ENCODE measurements at regions of chr21 and their contacts with region 1.

Region 1: GRCh38 chr21:42366321-42367009 is at the start of gene TFF1:
- DNase-seq: no peak
- H3K4me3 ChIP-seq: no peak within 1 kb of the TSS
- H3K27ac ChIP-seq: no peak within 1 kb of the TSS
- H3K4me1 ChIP-seq: no peaks in the 10 kb centered on the region
- H3K27me3 ChIP-seq: peaks cover 0 to 9% of the 10 kb centered on the region in 2 donors
- CTCF ChIP-seq: no peak
- POLR2A ChIP-seq: no peak
- total RNA-seq, gene TFF1: 0.98 to 4.4 TPM in 2 of 3 donors, not detected in the other

Region 2: GRCh38 chr21:42414928-42415769 is 48.7 kb after region 1 on chr21:
- intact Hi-C with region 1: loop called (anchors 1 kb)
- DNase-seq: no peak
- H3K4me3 ChIP-seq: no peak overlapping the region
- H3K27ac ChIP-seq: no peak overlapping the region
- H3K4me1 ChIP-seq: no peaks in the 10 kb centered on the region
- H3K27me3 ChIP-seq: no peaks in the 10 kb centered on the region
- CTCF ChIP-seq: no peak
- POLR2A ChIP-seq: no peak

Region 3: GRCh38 chr21:43012595-43012994 is 646.1 kb after region 1 on chr21:
- intact Hi-C with region 1: no loop called
- DNase-seq: no peak
- H3K4me3 ChIP-seq: no peak overlapping the region
- H3K27ac ChIP-seq: no peak overlapping the region
- H3K4me1 ChIP-seq: no peaks in the 10 kb centered on the region
- H3K27me3 ChIP-seq: no peaks in the 10 kb centered on the region
- CTCF ChIP-seq: no peak
- POLR2A ChIP-seq: no peak

Region 4: DNA sequence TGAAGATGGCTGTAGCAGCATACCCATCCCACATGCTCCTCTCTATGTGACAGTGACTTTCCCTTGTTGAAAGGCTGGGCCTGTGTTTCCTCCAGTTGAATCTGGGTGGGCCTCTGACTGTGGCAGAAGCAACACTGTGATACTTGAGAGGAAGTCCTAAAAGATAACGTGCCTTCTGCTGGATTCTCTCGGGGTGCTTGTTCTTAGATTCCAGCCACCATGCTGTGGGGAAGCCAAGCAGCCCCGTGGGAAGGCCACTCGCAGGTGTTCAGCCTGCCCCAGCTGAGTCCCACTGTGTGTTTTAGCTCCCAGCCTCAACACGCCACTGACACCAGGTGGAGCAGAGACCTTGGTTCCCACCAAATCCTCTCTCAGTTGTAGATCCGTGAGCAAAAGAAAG is 1677.1 kb after region 1 on chr21:
- intact Hi-C with region 1: no loop called
- DNase-seq: no peak
- H3K4me3 ChIP-seq: no peak overlapping the region
- H3K27ac ChIP-seq: no peak overlapping the region
- H3K4me1 ChIP-seq: no peaks in the 10 kb centered on the region
- H3K27me3 ChIP-seq: no peaks in the 10 kb centered on the region
- CTCF ChIP-seq: no peak
- POLR2A ChIP-seq: no peak